ENCODE measurements at regions of chr1 and their contacts with region 1.

Region 1: DNA sequence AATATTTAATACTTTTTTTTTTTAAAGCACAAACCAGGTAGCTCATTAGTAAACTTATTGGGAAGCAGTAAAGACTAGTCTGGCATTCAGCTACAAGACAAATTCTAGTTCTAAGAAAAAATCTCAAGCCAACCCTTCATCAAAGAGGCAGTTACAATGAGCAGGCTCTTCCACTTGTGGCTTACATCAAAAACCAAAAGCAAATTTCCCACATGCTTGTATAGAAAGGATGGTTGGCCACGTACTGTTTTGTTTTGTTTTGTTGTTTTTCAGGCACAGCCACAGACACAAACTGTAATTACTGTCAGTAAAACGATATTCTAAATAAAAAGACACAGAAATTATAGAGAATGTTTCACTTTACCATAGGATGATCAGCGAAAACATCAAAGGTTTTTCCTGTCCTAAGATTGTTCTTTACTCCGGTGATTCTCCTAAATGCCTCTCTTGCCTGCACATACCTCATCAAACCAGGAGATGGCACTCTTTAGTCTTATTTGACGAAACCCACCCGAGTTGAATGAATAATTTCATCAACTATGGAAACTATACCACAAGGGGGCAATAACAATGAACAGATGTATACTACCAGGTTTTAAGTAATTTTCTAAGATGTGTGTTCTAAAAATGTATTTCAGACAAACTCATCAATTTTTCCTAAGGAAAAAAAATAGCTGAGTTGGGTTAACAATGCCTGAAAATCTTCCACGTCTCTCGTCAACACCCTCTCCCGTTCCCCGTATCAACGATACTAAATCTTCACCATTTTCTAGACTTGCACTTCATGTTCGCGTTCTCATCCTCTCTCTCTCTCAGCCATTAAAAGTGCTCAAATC is 26.9 kb downstream of the RPL5 start:
- DNase-seq: peak; percentile 9 to 88 (median 47)
- ATAC-seq: peak; percentile 97
- H3K4me3 ChIP-seq: peak overlapping the region in 1 of 2 experiments; percentile 4
- H3K4me3 Mint-ChIP-seq: peak overlapping the region; percentile 68
- H3K27ac ChIP-seq: no peak overlapping the region
- H3K27ac Mint-ChIP-seq: peak overlapping the region; percentile 73
- H3K4me1 ChIP-seq: peaks cover 8% of the 10 kb centered on the region
- H3K4me1 Mint-ChIP-seq: peaks cover 17% of the 10 kb centered on the region
- H3K27me3 ChIP-seq: no peaks in the 10 kb centered on the region
- H3K27me3 Mint-ChIP-seq: no peaks in the 10 kb centered on the region
- CTCF ChIP-seq: peak; percentile 98

Region 2: GRCh38 chr1:92877792-92878191 is 19.0 kb after region 1 on chr1:
- CTCF ChIA-PET with region 1: interaction called, 54 read pairs
- POLR2A ChIA-PET with region 1: interaction called, 4 read pairs
- intact Hi-C with region 1: no loop called
- DNase-seq: peak in 2 of 9 experiments; percentile 40 to 59
- ATAC-seq: peak; percentile 29
- H3K4me3 ChIP-seq: peak overlapping the region in 1 of 2 experiments; percentile 13
- H3K4me3 Mint-ChIP-seq: peak overlapping the region; percentile 33
- H3K27ac ChIP-seq: peak overlapping the region in 1 of 2 experiments; percentile 67
- H3K27ac Mint-ChIP-seq: peak overlapping the region; percentile 88
- H3K4me1 ChIP-seq: peaks cover 20% of the 10 kb centered on the region
- H3K4me1 Mint-ChIP-seq: peaks cover 39% of the 10 kb centered on the region
- H3K27me3 ChIP-seq: no peaks in the 10 kb centered on the region
- H3K27me3 Mint-ChIP-seq: no peaks in the 10 kb centered on the region
- CTCF ChIP-seq: no peak

Region 3: DNA sequence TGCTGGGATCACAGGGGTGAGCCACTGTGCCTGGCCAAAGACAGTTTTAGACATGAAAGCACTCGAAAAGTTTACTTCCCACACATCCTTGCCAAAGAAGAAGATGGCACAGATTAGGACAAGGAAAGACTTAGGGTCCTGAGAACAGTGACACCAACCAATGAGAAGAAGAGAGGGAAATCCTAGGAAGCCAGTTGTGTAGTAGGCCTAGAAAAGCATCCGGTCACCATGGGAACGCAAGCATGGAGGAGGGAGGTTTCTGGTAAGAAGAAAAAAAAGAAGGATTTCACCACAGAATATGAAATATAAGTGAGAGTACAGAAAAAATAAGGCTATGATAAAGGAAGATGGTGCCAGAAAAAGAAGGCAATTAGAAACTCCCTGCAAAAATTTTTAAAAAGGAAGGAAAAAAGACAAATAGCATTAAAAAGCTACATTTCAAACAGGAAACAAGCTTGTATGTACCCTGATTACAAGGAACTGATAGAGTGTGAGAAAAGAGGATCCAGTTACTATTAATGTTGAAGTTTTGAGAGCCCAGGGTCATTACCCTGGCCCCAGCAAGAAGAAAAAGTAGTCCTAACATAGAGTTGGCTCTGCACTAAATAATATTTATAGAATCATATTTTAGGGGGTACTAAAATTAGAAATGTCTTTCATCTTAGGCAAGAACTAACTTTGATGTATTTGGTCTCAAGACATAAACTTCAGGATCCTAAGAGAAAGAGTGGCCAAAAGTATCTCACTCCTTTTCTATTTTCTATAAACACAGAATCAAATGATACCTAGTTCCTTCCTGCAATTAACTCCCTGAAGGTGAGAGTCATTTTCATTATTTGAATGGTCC is 86.3 kb after region 1 on chr1:
- CTCF ChIA-PET with region 1: interaction called, 19 read pairs
- POLR2A ChIA-PET with region 1: interaction called, 4 read pairs
- intact Hi-C with region 1: no loop called
- DNase-seq: no peak
- ATAC-seq: no peak
- H3K4me3 ChIP-seq: no peak overlapping the region
- H3K4me3 Mint-ChIP-seq: no peak overlapping the region
- H3K27ac ChIP-seq: no peak overlapping the region
- H3K27ac Mint-ChIP-seq: no peak overlapping the region
- H3K4me1 ChIP-seq: peaks cover 29% of the 10 kb centered on the region
- H3K4me1 Mint-ChIP-seq: peaks cover 58% of the 10 kb centered on the region
- H3K27me3 ChIP-seq: no peaks in the 10 kb centered on the region
- H3K27me3 Mint-ChIP-seq: no peaks in the 10 kb centered on the region
- CTCF ChIP-seq: no peak

Region 4: GRCh38 chr1:92968138-92969032 is 109.6 kb after region 1 on chr1:
- CTCF ChIA-PET with region 1: interaction called, 193 read pairs
- POLR2A ChIA-PET with region 1: no interaction called
- intact Hi-C with region 1: no loop called
- DNase-seq: peak in 4 of 9 experiments; percentile 22 to 72 (median 43)
- ATAC-seq: peak; percentile 59
- H3K4me3 ChIP-seq: no peak overlapping the region
- H3K4me3 Mint-ChIP-seq: no peak overlapping the region
- H3K27ac ChIP-seq: no peak overlapping the region
- H3K27ac Mint-ChIP-seq: no peak overlapping the region
- H3K4me1 ChIP-seq: peaks cover 37% of the 10 kb centered on the region
- H3K4me1 Mint-ChIP-seq: peaks cover 20% of the 10 kb centered on the region
- H3K27me3 ChIP-seq: no peaks in the 10 kb centered on the region
- H3K27me3 Mint-ChIP-seq: no peaks in the 10 kb centered on the region
- CTCF ChIP-seq: peak; percentile 84

Region 5: DNA sequence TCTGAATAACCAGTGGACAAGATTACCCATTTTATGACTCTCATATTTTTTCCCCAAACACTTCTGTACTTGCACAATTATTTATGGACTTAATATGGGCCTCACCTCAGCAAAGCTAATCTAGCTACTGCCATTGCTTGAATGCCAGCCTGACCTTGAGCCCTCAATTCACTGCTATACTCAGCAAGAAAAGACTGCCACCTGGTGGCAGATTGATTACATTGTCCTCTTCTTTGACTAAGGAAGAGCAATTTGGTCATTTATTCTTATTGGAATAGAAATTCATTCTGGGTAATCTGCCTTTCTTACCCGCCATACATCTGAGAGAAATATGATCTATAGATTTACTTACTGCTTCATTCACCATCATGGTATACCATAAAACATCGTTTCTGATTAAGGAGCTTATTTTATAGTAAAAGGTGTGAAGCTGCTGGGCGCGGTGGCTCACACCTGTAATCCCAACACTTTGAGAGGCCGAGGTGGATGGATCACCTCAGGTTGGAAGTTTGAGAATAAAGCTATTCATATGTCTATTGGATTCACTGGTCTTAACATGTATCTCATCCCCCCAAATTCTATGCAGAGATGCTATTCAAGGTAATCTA is 135.4 kb after region 1 on chr1:
- CTCF ChIA-PET with region 1: interaction called, 225 read pairs
- POLR2A ChIA-PET with region 1: interaction called, 9 read pairs
- intact Hi-C with region 1: loop called (anchors 1 kb)
- DNase-seq: peak; percentile 30 to 90 (median 76)
- ATAC-seq: peak; percentile 91
- H3K4me3 ChIP-seq: no peak overlapping the region
- H3K4me3 Mint-ChIP-seq: no peak overlapping the region
- H3K27ac ChIP-seq: no peak overlapping the region
- H3K27ac Mint-ChIP-seq: peak overlapping the region; percentile 11
- H3K4me1 ChIP-seq: peaks cover 34% of the 10 kb centered on the region
- H3K4me1 Mint-ChIP-seq: peaks cover 45% of the 10 kb centered on the region
- H3K27me3 ChIP-seq: no peaks in the 10 kb centered on the region
- H3K27me3 Mint-ChIP-seq: no peaks in the 10 kb centered on the region
- CTCF ChIP-seq: peak; percentile 77

Measured in CD8-positive, alpha-beta T cell (primary cell).